Natural killer cell (primary cell): ENCODE measurements at regions of chr12 and their contacts with region 1.

Region 1: GRCh38 chr12:96314723-96315122 is 85.5 kb downstream of the CDK17 start:
- DNase-seq: no peak
- ATAC-seq: peak in 2 of 3 donors; percentile 25 to 30
- H3K4me3 ChIP-seq: no peak overlapping the region
- H3K4me3 Mint-ChIP-seq: no peak overlapping the region
- H3K27ac ChIP-seq: no peak overlapping the region
- H3K27ac Mint-ChIP-seq: peak overlapping the region; percentile 22 to 79
- H3K4me1 ChIP-seq: no peaks in the 10 kb centered on the region
- H3K4me1 Mint-ChIP-seq: peaks cover 15 to 17% of the 10 kb centered on the region in 2 donors
- H3K27me3 ChIP-seq: no peaks in the 10 kb centered on the region
- H3K27me3 Mint-ChIP-seq: no peaks in the 10 kb centered on the region
- CTCF ChIP-seq: no peak

Region 2: DNA sequence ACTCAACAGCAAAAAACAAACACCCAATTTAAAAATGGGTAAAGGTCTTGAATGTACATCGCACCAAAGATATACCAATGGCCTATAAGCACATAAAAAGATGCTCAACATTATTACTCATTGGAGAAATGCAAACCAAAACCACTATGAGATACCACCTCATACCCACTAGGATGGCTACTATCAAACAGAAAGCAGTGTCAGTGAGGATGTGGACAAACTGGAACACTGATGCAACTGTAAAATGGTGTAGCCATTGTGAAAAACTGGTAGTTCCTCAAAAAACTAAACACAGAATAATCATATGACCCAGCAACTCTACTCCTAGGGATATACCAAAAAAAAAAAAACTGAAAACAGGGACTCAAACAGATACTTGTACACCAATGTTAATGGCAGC is 36.3 kb after region 1 on chr12:
- intact Hi-C with region 1: loop called (anchors 5 kb)
- DNase-seq: no peak
- ATAC-seq: peak; percentile 71 to 82 (median 74)
- H3K4me3 ChIP-seq: no peak overlapping the region
- H3K4me3 Mint-ChIP-seq: peak overlapping the region; percentile 62
- H3K27ac ChIP-seq: peak overlapping the region; percentile 20
- H3K27ac Mint-ChIP-seq: peak overlapping the region; percentile 76 to 81
- H3K4me1 ChIP-seq: peaks cover 35% of the 10 kb centered on the region
- H3K4me1 Mint-ChIP-seq: peaks cover 87 to 88% of the 10 kb centered on the region in 2 donors
- H3K27me3 ChIP-seq: no peaks in the 10 kb centered on the region
- H3K27me3 Mint-ChIP-seq: no peaks in the 10 kb centered on the region
- CTCF ChIP-seq: no peak

Region 3: GRCh38 chr12:96434107-96434506 is 119.4 kb after region 1 on chr12:
- intact Hi-C with region 1: no loop called
- DNase-seq: peak; percentile 69 to 94
- ATAC-seq: peak; percentile 97 to 100 (median 97)
- H3K4me3 ChIP-seq: no peak overlapping the region
- H3K4me3 Mint-ChIP-seq: peak overlapping the region; percentile 36
- H3K27ac ChIP-seq: peak overlapping the region; percentile 79
- H3K27ac Mint-ChIP-seq: peak overlapping the region; percentile 68 to 86
- H3K4me1 ChIP-seq: peaks cover 22% of the 10 kb centered on the region
- H3K4me1 Mint-ChIP-seq: peaks cover 6 to 11% of the 10 kb centered on the region in 2 donors
- H3K27me3 ChIP-seq: no peaks in the 10 kb centered on the region
- H3K27me3 Mint-ChIP-seq: no peaks in the 10 kb centered on the region
- CTCF ChIP-seq: no peak